PC-9 (cell line): ENCODE measurements at regions of chr3 and their contacts with region 1.

Region 1: DNA sequence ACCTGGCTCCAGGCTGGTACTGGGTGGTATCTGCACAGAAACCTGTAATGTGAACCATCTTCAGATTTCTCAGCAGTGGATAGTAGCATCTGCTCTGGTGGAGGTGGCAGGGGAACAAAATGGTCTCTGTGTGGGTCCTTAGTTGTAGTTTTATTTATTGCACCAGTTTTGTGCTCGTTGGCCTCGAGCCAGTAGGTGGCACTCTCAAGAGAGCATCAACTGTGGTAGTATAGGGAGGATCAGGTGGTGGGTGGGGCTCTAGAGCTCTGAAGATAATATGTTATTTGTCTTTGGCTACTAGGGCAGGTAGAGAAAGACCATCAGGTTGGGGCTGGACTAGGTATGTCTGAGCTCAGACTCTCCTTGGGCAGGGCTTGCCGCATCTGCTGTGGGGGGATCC is 254.0 kb upstream of the GPR149 start:
- DNase-seq: no peak
- H3K4me3 ChIP-seq: no peak overlapping the region
- H3K27ac ChIP-seq: no peak overlapping the region
- H3K4me1 ChIP-seq: no peaks in the 10 kb centered on the region
- H3K27me3 ChIP-seq: no peaks in the 10 kb centered on the region
- CTCF ChIP-seq: no peak

Region 2: GRCh38 chr3:155078711-155079467 is 394.9 kb after region 1 on chr3:
- CTCF ChIA-PET with region 1: interaction called, 18 read pairs
- POLR2A ChIA-PET with region 1: no interaction called
- intact Hi-C with region 1: no loop called
- DNase-seq: no peak
- H3K4me3 ChIP-seq: no peak overlapping the region
- H3K27ac ChIP-seq: no peak overlapping the region
- H3K4me1 ChIP-seq: peaks cover 6% of the 10 kb centered on the region; the same call in 1 of the 2 replicates
- H3K27me3 ChIP-seq: peaks cover 17% of the 10 kb centered on the region; the same call in 1 of the 2 replicates
- CTCF ChIP-seq: no peak